Ascending aorta (tissue), 2 donors: ENCODE measurements at regions of chr6 and their contacts with region 1.

Region 1: DNA sequence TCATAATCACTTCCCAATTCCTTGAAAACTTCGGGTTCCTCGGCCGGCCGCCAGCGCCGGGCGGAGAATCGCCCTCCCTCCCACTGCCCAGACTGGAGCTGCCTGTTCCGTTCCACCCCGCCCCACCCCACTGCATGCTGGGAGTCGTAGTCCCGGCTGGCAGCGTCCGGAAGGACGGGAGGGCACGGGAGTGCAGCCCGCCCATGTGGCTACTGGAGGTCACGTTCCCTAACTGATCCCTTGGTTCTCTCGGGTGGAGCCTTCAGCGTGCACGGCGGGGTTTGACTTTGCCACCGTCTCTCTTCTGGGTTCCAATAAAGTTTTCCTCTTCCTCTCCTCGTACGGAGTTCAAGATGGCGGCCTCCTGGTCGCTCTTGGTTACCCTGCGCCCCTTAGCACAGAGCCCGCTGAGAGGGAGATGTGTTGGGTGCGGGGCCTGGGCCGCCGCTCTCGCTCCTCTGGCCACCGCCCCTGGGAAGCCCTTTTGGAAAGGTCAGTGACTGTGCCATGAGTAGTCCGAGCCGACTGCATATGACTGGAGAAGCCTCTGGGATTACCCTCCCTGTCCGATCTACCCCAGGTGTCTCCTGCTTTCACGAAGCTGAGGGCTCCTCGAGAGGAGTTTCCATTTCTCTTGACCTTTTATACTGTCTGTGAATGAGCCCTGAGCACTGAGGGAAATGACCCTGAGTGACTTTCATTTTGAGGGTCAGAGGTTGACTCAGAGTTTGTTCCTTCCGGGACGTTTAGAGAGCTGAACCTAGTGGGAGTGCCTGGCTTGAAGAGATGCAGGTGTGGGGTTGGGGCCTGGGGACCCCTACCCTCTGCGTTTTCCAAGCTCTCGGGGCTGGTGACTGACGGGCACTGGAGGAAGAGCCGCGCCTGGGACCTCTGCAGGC is at the start of gene AFG1L:
- DNase-seq: peak; percentile 75 to 95
- H3K4me3 ChIP-seq: peak within 1 kb of the TSS; percentile 72 to 91
- H3K27ac ChIP-seq: peak within 1 kb of the TSS; percentile 74 to 90
- H3K4me1 ChIP-seq: peaks cover 4 to 5% of the 10 kb centered on the region in 2 donors
- H3K27me3 ChIP-seq: no peaks in the 10 kb centered on the region
- CTCF ChIP-seq: peak in 1 of 3 experiments; percentile 2
- total RNA-seq, gene AFG1L: 0.53 TPM

Region 2: GRCh38 chr6:108260809-108261569 is 34.0 kb before region 1 on chr6 and contains the start of gene SNX3:
- intact Hi-C with region 1: loop called (anchors 1 kb)
- DNase-seq: peak; percentile 91 to 98
- H3K4me3 ChIP-seq: peak within 1 kb of the TSS; percentile 88 to 91
- H3K27ac ChIP-seq: peak within 1 kb of the TSS; percentile 93 to 95
- H3K4me1 ChIP-seq: peaks cover 0 to 12% of the 10 kb centered on the region in 2 donors
- H3K27me3 ChIP-seq: no peaks in the 10 kb centered on the region
- CTCF ChIP-seq: no peak
- total RNA-seq, gene SNX3: 112 TPM